CD4-positive, alpha-beta memory T cell (primary cell): ENCODE measurements at regions of chr3 and their contacts with region 1.

Region 1: GRCh38 chr3:14915636-14916222 is 31.7 kb upstream of the NR2C2 start:
- DNase-seq: peak in 4 of 5 donors; percentile 20 to 28 (median 24)
- H3K4me3 ChIP-seq: no peak overlapping the region
- H3K4me3 Mint-ChIP-seq: no peak overlapping the region
- H3K27ac ChIP-seq: no peak overlapping the region
- H3K27ac Mint-ChIP-seq: no peak overlapping the region
- H3K4me1 ChIP-seq: no peaks in the 10 kb centered on the region
- H3K4me1 Mint-ChIP-seq: no peaks in the 10 kb centered on the region
- H3K27me3 ChIP-seq: no peaks in the 10 kb centered on the region
- H3K27me3 Mint-ChIP-seq: peaks cover 2 to 3% of the 10 kb centered on the region in 2 donors

Region 2: DNA sequence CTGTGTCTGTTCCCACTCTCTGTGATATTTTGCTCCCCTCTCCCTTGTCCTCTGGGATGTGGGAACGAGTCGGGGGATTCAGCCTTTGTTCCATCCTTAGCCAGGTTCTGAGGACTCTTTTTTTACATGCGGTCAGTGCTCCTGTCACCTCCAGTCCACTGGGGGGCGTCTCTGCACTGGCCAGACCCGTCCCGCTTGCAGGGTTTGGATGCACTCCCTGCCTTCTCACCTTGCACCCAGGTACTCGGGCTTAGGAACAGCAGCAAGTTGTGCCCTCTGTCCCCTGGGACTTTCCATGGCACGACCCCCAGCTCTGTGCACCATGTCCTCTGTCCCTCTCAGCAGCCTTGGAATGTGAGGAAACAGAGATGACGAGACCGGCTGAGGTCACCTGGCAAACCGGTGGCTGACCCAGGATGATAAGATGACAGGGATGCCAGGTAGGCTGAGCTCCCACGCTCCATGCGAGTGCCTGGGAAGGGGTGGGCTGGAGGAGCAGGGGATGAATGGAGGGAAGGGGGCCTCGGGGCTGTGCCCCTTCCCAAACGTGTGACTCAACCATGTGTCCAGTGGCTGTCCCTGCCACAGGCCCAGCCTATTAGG is 124.3 kb before region 1 on chr3:
- CTCF ChIA-PET with region 1: interaction called, 12 read pairs
- POLR2A ChIA-PET with region 1: no interaction called
- intact Hi-C with region 1: loop called (anchors 1 kb)
- DNase-seq: peak in 4 of 5 donors; percentile 28 to 43 (median 37)
- H3K4me3 ChIP-seq: no peak overlapping the region
- H3K4me3 Mint-ChIP-seq: no peak overlapping the region
- H3K27ac ChIP-seq: no peak overlapping the region
- H3K27ac Mint-ChIP-seq: no peak overlapping the region
- H3K4me1 ChIP-seq: no peaks in the 10 kb centered on the region
- H3K4me1 Mint-ChIP-seq: peaks cover 0 to 4% (median 0%) of the 10 kb centered on the region in 4 donors
- H3K27me3 ChIP-seq: no peaks in the 10 kb centered on the region
- H3K27me3 Mint-ChIP-seq: peaks cover 13 to 25% of the 10 kb centered on the region in 2 donors

Region 3: GRCh38 chr3:14857506-14857905 is 58.2 kb before region 1 on chr3:
- CTCF ChIA-PET with region 1: interaction called, 9 read pairs
- POLR2A ChIA-PET with region 1: no interaction called
- intact Hi-C with region 1: loop called (anchors 1 kb)
- DNase-seq: no peak
- H3K4me3 ChIP-seq: no peak overlapping the region
- H3K4me3 Mint-ChIP-seq: no peak overlapping the region
- H3K27ac ChIP-seq: no peak overlapping the region
- H3K27ac Mint-ChIP-seq: peak overlapping the region in 1 of 7 donors; percentile 13
- H3K4me1 ChIP-seq: no peaks in the 10 kb centered on the region
- H3K4me1 Mint-ChIP-seq: no peaks in the 10 kb centered on the region
- H3K27me3 ChIP-seq: no peaks in the 10 kb centered on the region
- H3K27me3 Mint-ChIP-seq: peaks cover 8 to 10% of the 10 kb centered on the region in 2 donors

Region 4: DNA sequence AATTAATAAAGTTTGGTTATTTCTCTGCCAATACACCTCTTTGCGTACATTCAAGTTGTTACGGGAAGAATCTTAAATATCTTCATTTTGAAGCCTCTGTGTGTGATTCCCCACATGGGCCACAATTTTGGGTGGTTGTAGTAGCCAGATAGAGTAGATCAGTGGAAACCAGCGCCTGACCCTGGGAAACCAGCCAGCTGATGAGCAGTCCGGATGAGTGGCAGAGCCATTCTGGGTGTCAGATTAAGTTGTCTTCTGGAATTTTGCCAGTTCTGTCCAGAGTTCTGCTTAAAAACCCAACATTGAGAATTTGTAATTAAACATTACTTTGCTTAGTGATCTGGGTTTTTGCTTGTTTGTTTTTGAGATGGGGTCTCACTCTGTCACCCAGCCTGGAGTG is 99.7 kb after region 1 on chr3:
- CTCF ChIA-PET with region 1: no interaction called
- POLR2A ChIA-PET with region 1: no interaction called
- intact Hi-C with region 1: no loop called
- DNase-seq: no peak
- H3K4me3 ChIP-seq: no peak overlapping the region
- H3K4me3 Mint-ChIP-seq: no peak overlapping the region
- H3K27ac ChIP-seq: no peak overlapping the region
- H3K27ac Mint-ChIP-seq: peak overlapping the region in 1 of 7 donors; percentile 5
- H3K4me1 ChIP-seq: no peaks in the 10 kb centered on the region
- H3K4me1 Mint-ChIP-seq: peaks cover 0 to 5% (median 1%) of the 10 kb centered on the region in 4 donors
- H3K27me3 ChIP-seq: no peaks in the 10 kb centered on the region
- H3K27me3 Mint-ChIP-seq: no peaks in the 10 kb centered on the region

Region 5: GRCh38 chr3:16589867-16590624 is 1674.3 kb after region 1 on chr3:
- CTCF ChIA-PET with region 1: no interaction called
- POLR2A ChIA-PET with region 1: no interaction called
- intact Hi-C with region 1: no loop called
- DNase-seq: no peak
- H3K4me3 ChIP-seq: no peak overlapping the region
- H3K4me3 Mint-ChIP-seq: no peak overlapping the region
- H3K27ac ChIP-seq: no peak overlapping the region
- H3K27ac Mint-ChIP-seq: peak overlapping the region in 1 of 7 donors; percentile 28
- H3K4me1 ChIP-seq: no peaks in the 10 kb centered on the region
- H3K4me1 Mint-ChIP-seq: peaks cover 0 to 10% (median 2%) of the 10 kb centered on the region in 4 donors
- H3K27me3 ChIP-seq: no peaks in the 10 kb centered on the region
- H3K27me3 Mint-ChIP-seq: peaks cover 1 to 5% of the 10 kb centered on the region in 2 donors